Mammary epithelial cell (primary cell): ENCODE measurements at regions of chr17 and their contacts with region 1.

Region 1: DNA sequence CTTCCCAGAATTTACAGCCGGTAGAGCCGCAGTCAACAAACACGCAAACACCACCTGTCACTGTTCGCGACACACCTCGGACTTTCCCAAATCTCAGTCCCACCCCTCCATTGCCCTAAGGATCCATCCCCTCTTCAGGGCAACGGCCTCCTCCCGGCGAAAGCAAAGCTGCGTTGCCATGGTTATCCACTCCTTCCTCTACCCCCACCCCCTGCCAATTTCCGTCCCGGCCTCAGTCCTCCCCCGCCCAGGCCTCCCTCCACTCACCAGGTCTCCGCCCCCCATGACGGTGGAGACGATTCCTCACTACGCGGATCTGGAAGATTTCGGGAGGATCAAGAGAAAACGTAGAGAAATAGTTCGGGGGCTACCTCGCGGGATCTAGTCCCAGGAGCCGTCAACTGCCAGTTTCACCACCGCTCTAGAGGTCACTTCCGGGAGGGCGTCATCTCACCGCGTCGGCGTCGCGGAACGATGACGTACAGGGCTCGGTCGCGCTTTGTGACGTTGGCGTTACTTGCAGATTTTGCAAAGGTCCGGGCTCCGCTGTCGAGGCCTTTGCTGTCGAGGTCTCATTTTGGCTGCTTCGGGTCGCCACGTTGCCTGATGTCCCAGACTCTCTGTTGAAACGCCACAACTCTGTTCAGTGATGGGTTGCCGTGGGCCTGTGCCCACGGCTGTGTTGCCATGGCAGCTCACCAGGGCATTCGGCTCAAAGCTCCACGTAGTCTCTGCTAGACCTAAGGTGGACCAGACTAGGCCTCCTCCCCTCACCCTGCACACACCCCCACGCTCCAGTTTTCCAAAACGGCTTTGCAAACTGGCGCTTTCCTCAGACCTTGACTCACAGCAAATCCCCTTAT is at the start of gene CWC25:
- DNase-seq: peak; percentile 94
- H3K4me3 ChIP-seq: peak within 1 kb of the TSS; percentile 59 to 90 (median 87)
- H3K27ac ChIP-seq: peak within 1 kb of the TSS; percentile 98
- H3K4me1 ChIP-seq: peaks cover 7% of the 10 kb centered on the region
- H3K27me3 ChIP-seq: no peaks in the 10 kb centered on the region
- CTCF ChIP-seq: no peak
- total RNA-seq, gene CWC25: 9.2 to 18.0 TPM

Region 2: DNA sequence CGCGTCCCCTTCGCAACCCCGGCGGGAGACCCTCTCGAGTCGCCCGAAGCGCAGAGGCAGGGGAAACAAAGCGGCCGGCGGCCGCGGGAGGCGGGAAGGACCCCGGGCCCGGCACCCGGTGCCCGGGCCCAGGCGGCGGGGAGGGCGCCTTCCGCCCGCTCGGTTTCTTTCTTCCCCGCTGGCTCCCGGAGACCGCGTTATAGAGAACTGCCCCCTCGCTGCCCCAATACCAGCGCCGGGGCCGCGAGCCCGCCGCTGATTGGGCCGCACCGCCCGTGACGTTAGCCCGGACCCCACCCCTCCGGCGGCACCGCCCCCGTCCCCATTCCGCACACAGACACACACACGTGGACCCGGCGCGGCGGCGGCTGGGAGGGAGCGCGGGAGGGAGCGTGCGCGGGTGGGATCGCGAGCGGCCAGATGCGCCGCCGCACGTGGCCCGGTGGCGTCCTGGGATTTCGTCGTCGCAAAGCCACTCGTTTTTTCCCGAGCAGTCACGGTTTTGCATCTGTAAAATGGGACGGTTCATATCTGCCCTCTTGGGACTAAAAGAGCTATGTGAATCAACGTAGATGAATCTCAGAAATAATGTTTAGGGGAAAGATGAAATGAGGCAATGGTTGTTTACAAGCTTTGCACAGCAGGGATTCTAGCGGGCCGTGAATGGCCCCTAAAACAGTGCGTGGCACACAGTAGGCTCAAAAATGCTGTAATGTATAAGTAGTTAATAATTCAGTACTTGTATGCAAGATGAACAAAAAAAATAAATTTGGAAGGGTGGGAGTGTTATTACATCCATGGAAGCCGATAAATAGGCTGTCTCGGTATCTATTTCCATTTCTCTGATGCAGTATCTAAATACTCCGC is 150.1 kb before region 1 on chr17 and contains the start of gene EPOP:
- CTCF ChIA-PET with region 1: no interaction called
- dilution Hi-C with region 1: no loop called
- in situ Hi-C with region 1: no loop called
- intact Hi-C with region 1: loop called (anchors 10 kb)
- DNase-seq: peak; percentile 78
- H3K4me3 ChIP-seq: peak within 1 kb of the TSS; percentile 49 to 62 (median 53)
- H3K27ac ChIP-seq: peak within 1 kb of the TSS; percentile 19
- H3K4me1 ChIP-seq: peaks cover 17% of the 10 kb centered on the region
- H3K27me3 ChIP-seq: peaks cover 5% of the 10 kb centered on the region
- CTCF ChIP-seq: no peak
- total RNA-seq, gene EPOP: 2.8 to 3.2 TPM

Region 3: GRCh38 chr17:38724337-38724988 is 100.7 kb before region 1 on chr17:
- CTCF ChIA-PET with region 1: no interaction called
- dilution Hi-C with region 1: no loop called
- in situ Hi-C with region 1: no loop called
- intact Hi-C with region 1: no loop called
- DNase-seq: no peak
- H3K4me3 ChIP-seq: no peak overlapping the region
- H3K27ac ChIP-seq: no peak overlapping the region
- H3K4me1 ChIP-seq: no peaks in the 10 kb centered on the region
- H3K27me3 ChIP-seq: no peaks in the 10 kb centered on the region
- CTCF ChIP-seq: no peak

Region 4: GRCh38 chr17:38752119-38752929 is 72.8 kb before region 1 on chr17 and contains the start of gene PSMB3:
- CTCF ChIA-PET with region 1: no interaction called
- dilution Hi-C with region 1: loop called (anchors 5 kb)
- in situ Hi-C with region 1: no loop called
- intact Hi-C with region 1: no loop called
- DNase-seq: peak; percentile 99
- H3K4me3 ChIP-seq: peak within 1 kb of the TSS; percentile 81 to 96 (median 94)
- H3K27ac ChIP-seq: peak within 1 kb of the TSS; percentile 78
- H3K4me1 ChIP-seq: peaks cover 33% of the 10 kb centered on the region
- H3K27me3 ChIP-seq: no peaks in the 10 kb centered on the region
- CTCF ChIP-seq: no peak
- total RNA-seq, gene PSMB3: 150 to 218 TPM

Region 5: DNA sequence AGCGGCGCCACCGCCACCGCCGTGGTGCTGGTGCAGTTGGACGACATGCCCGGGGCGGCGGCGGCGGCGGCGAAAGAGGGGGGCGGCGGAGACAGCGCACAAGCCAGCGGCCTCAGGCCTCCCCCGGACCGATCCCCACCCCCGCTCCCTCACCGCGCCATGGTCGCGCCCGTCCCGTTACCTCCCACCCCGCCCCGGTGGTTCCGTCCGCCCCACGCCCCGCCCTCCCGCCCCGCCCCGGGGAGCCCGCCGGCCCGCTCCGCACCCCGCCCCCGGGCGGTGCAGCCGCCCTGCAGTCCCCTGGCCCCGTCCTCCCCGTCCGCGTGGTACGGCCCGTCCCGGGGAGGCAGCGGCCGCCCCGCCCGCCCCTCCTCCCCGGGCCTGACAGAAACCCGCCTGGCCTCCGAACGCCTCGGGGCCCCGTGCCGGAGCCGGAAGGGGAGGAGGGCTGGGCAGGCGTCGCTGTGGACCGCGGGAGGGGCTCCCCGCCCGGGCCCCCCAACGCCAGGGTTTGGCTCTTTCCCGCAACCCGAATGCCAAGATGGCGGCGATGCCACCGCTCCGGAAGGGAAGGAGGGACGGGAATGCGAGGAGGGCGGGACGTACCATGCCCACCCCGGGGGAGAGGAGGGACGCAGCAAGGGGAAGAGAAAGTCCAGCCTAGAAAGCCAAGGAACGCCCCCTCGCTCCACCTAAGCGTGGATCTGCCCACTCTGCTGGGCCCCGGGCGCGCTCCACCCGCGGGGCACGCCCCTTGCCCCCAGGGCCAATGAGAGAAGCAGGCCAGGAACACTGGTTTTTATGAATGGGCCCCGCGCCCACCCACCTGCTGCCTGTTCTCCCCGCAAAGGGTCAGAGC is 25.5 kb before region 1 on chr17 and contains the start of gene PIP4K2B:
- CTCF ChIA-PET with region 1: no interaction called
- dilution Hi-C with region 1: no loop called
- in situ Hi-C with region 1: no loop called
- intact Hi-C with region 1: loop called (anchors 2 kb)
- DNase-seq: peak; percentile 95
- H3K4me3 ChIP-seq: peak within 1 kb of the TSS; percentile 73 to 95 (median 86)
- H3K27ac ChIP-seq: peak within 1 kb of the TSS; percentile 85
- H3K4me1 ChIP-seq: peaks cover 17% of the 10 kb centered on the region
- H3K27me3 ChIP-seq: no peaks in the 10 kb centered on the region
- CTCF ChIP-seq: no peak
- total RNA-seq, gene PIP4K2B: 34.6 to 55.7 TPM

Region 6: DNA sequence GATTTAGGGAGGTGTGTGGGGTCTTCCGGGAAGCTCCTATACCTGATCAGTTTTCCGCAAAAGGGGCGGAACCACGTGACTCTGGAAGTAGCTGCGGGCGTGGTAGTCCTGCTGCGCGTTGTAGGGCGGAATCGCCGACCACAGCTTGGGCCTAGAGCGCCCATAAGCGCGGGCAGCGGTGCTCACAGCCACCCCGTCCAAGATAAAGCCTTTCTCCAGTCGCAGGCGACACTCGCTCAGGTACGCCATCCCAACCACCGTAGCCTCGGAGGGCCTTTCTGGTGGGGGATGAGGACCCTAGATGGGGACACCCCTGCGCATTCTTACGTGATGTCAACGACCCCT is 16.0 kb after region 1 on chr17:
- CTCF ChIA-PET with region 1: no interaction called
- dilution Hi-C with region 1: no loop called
- in situ Hi-C with region 1: no loop called
- intact Hi-C with region 1: no loop called
- DNase-seq: no peak
- H3K4me3 ChIP-seq: peak overlapping the region in 1 of 3 experiments; percentile 36
- H3K27ac ChIP-seq: no peak overlapping the region
- H3K4me1 ChIP-seq: no peaks in the 10 kb centered on the region
- H3K27me3 ChIP-seq: no peaks in the 10 kb centered on the region
- CTCF ChIP-seq: no peak

Region 7: GRCh38 chr17:38922538-38923297 is 97.6 kb after region 1 on chr17:
- CTCF ChIA-PET with region 1: no interaction called
- dilution Hi-C with region 1: loop called (anchors 5 kb)
- in situ Hi-C with region 1: no loop called
- intact Hi-C with region 1: no loop called
- DNase-seq: peak; percentile 15
- H3K4me3 ChIP-seq: no peak overlapping the region
- H3K27ac ChIP-seq: no peak overlapping the region
- H3K4me1 ChIP-seq: no peaks in the 10 kb centered on the region
- H3K27me3 ChIP-seq: no peaks in the 10 kb centered on the region
- CTCF ChIP-seq: peak in 1 of 2 donors; percentile 0